ENCODE measurements at regions of chr11 and their contacts with region 1.

Region 1: DNA sequence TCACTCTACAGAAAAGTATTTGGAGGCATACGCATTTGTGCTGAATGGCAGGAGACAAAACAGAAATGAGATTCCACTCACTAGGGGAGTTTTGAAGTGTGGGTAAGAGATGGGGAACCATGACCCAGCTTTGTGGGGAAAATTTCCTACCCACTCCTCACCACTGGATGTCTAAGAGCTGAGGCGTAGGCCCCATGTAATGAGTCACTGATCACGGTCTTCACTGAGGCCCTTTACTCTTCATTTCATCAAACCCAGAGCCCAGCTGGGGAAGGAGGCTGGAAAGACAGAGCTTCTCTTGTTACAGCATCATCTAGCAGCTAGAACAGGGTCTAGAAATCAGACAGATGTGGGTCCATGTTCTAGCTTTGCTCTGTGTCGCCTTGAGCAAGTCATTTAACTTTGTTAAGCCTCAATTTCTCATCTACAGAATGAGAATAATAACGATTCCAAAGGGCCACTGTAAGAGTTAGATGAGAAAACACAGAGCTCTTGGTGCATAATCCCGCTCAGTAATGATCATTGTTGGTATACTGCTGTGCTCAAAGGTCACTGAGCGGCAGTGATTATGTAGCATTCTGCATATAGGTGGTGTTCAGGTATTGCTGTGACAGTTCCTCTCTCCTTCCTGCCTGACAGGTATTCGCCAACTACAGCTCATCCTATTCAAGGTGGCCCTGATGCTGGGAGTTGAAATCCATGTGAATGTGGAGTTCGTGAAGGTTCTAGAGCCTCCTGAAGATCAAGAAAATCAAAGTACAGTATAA is 97.2 kb downstream of the MICAL2 start:
- DNase-seq: no peak
- H3K4me3 Mint-ChIP-seq: peak overlapping the region; percentile 59
- H3K27ac Mint-ChIP-seq: peak overlapping the region; percentile 89
- H3K4me1 Mint-ChIP-seq: peaks cover 74% of the 10 kb centered on the region
- H3K27me3 Mint-ChIP-seq: no peaks in the 10 kb centered on the region

Region 2: GRCh38 chr11:12149672-12150225 is 57.8 kb before region 1 on chr11:
- intact Hi-C with region 1: loop called (anchors 1 kb)
- DNase-seq: peak; percentile 31
- H3K4me3 Mint-ChIP-seq: peak overlapping the region; percentile 43
- H3K27ac Mint-ChIP-seq: peak overlapping the region; percentile 96
- H3K4me1 Mint-ChIP-seq: peaks cover 74% of the 10 kb centered on the region
- H3K27me3 Mint-ChIP-seq: no peaks in the 10 kb centered on the region

Region 3: GRCh38 chr11:12174477-12175143 is 33.0 kb before region 1 on chr11:
- intact Hi-C with region 1: loop called (anchors 1 kb)
- DNase-seq: no peak
- H3K4me3 Mint-ChIP-seq: peak overlapping the region; percentile 73
- H3K27ac Mint-ChIP-seq: peak overlapping the region; percentile 98
- H3K4me1 Mint-ChIP-seq: peaks cover 73% of the 10 kb centered on the region
- H3K27me3 Mint-ChIP-seq: no peaks in the 10 kb centered on the region

Region 4: DNA sequence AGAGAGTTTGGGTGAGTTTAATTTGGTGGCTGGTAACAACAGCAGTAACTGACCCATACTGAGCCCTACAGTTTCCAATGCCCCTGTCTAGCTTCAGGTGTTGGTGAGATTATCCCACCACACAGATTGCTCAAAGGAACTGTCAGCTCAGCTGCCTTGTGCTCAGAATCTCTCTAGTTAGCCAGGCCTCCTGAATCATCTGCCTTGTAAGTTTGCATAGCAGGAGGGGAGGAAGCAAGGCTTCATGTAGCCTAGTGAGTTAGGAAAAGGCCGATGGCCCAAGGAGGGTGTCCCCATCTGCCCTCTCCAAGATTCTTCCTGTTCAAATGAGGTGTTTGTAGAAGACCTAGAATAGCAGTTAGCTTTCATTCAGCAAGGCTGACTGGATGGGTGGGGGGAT is 22.9 kb before region 1 on chr11:
- intact Hi-C with region 1: no loop called
- DNase-seq: no peak
- H3K4me3 Mint-ChIP-seq: no peak overlapping the region
- H3K27ac Mint-ChIP-seq: peak overlapping the region; percentile 50
- H3K4me1 Mint-ChIP-seq: peaks cover 68% of the 10 kb centered on the region
- H3K27me3 Mint-ChIP-seq: no peaks in the 10 kb centered on the region

Region 5: GRCh38 chr11:12195768-12196167 is 11.8 kb before region 1 on chr11:
- intact Hi-C with region 1: loop called (anchors 1 kb)
- DNase-seq: peak; percentile 64
- H3K4me3 Mint-ChIP-seq: peak overlapping the region; percentile 99
- H3K27ac Mint-ChIP-seq: peak overlapping the region; percentile 98
- H3K4me1 Mint-ChIP-seq: peaks cover 66% of the 10 kb centered on the region
- H3K27me3 Mint-ChIP-seq: no peaks in the 10 kb centered on the region